ENCODE measurements at regions of chr19 and their contacts with region 1.

Region 1: DNA sequence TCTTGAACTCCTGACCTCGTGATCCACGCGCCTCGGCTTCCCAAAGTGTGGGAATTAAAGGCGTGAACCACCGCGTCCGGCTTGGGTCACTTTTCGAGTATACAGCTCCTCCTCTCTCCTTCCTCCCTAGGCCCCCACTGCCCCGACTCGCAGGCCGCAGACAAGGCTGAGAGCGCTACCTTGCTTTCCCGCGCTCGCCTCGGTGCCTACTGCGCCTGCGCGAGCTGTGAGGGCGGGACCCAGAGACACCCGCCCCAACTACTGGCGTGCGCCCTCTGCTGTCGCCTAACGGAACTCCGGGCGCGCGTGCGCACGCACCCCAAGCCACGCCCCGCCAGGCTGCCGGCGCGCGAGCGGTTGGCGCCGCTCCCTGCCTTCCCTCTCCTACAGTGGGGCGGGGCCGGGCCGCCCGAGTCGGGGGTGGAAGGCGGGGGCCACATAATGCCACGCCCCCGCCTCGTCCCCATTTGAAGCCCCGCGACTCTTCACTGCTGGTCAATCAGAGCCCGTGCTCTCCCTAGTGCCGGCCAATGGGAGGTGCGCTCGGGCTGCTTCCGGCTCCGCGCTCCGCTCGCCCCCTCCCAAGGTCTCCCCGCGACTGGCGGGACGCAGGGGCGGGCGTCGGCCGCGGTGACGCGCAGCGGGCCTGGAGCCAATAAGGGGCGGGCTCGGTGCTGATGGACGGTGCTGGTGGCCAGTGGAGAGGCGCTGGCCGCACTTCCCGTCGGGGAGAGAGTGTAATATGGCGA is at the start of gene RAB8A:
- DNase-seq: peak; percentile 98
- H3K4me3 Mint-ChIP-seq: peak within 1 kb of the TSS; percentile 99
- H3K27ac Mint-ChIP-seq: peak within 1 kb of the TSS; percentile 96
- H3K4me1 Mint-ChIP-seq: peaks cover 42% of the 10 kb centered on the region
- H3K27me3 Mint-ChIP-seq: no peaks in the 10 kb centered on the region
- total RNA-seq, gene RAB8A: 141 to 147 TPM

Region 2: GRCh38 chr19:15393963-15394362 is 717.4 kb before region 1 on chr19:
- CTCF ChIA-PET with region 1: no interaction called
- POLR2A ChIA-PET with region 1: no interaction called
- DNase-seq: no peak
- H3K4me3 Mint-ChIP-seq: no peak overlapping the region
- H3K27ac Mint-ChIP-seq: no peak overlapping the region
- H3K4me1 Mint-ChIP-seq: peaks cover 1% of the 10 kb centered on the region
- H3K27me3 Mint-ChIP-seq: no peaks in the 10 kb centered on the region

Region 3: DNA sequence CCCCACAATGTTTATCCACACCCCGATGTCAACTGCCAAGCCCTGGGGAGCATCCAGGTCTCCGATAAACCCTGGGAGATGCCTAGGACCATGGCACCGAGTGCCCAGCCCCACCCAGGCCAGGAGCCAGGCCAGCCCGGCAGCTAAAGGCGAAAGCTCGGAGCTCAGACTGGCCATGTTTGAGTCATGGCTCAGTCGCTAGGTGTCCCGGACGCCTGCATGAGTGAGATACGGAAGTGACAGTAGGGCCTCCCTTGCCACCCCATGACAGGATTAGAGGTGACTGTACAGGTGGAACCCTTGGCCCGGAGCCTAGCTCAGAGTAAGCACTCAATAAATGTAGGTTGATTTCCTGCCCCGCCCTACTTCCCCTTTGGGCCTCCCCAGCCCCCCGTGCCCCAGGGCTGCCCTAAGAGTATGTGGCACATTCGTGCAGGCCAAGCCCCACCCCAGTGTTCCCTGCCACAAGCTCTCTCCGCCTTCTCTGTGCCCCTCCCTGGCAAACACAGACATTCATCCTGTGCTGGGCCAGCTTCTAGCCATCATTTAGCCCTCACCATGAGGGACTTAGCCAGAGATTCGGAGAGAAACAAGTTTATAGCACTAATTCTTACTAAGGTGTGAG is 40.9 kb before region 1 on chr19:
- CTCF ChIA-PET with region 1: interaction called, 14 read pairs
- POLR2A ChIA-PET with region 1: interaction called, 73 read pairs
- DNase-seq: peak; percentile 90
- H3K4me3 Mint-ChIP-seq: no peak overlapping the region
- H3K27ac Mint-ChIP-seq: no peak overlapping the region
- H3K4me1 Mint-ChIP-seq: peaks cover 53% of the 10 kb centered on the region
- H3K27me3 Mint-ChIP-seq: no peaks in the 10 kb centered on the region

Region 4: DNA sequence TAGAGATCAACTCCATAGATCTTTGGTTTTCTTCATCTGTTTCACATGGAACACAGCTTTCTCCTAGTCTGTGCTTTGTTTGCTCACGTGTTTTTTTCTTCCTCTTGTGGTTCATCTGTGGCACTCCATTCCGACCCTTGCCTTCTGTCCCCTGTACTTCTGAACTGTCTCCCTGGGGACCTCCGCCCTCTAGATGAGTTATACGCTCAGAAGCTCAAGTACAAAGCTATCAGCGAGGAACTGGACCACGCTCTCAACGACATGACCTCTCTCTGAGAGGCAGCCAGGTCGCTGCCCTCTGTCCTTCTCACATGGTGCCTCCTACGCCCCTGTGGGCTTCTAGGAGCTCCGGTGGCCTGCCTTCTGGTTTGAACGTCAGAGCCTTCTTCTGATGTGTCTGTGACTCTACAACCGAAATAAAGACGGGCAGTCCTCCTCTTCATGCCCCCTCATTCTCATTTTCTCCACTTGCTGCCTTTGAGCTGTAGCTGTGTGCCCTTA is 16.2 kb before region 1 on chr19:
- CTCF ChIA-PET with region 1: interaction called, 18 read pairs
- POLR2A ChIA-PET with region 1: interaction called, 86 read pairs
- DNase-seq: no peak
- H3K4me3 Mint-ChIP-seq: no peak overlapping the region
- H3K27ac Mint-ChIP-seq: peak overlapping the region; percentile 65
- H3K4me1 Mint-ChIP-seq: peaks cover 41% of the 10 kb centered on the region
- H3K27me3 Mint-ChIP-seq: no peaks in the 10 kb centered on the region

Region 5: DNA sequence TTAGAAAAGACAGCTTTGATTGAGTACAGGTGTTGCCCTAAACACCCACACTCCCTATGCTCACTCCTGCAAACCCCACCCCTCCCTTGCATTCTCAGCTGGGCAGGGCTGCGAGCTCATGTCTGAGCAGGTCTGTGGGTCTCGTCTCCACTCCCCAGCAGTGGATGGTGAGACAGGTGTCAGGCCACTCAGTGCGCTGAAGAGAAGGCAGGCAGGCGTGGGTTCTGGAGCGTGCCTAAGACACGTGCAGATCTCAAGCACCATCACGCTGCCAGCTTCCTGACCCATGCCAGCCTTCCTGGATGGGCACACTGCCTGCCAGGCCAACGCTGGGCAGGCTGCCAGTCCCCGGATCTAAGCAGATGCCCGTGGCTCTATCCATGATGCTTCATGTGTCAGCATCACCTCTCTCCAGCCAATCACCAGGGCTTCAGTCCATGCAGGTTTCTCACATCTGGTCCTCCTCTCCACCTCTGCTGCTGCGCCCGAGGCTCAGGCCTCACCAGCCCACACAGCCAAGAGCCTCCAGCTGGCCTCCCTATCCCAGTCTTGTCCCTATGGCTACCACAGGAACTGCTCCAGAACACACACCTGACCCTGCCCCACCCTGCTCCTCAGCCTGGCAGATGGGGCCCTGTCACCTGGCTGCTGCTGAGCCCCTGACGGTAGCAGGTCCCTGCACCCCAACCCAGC is 317.9 kb after region 1 on chr19:
- CTCF ChIA-PET with region 1: no interaction called
- POLR2A ChIA-PET with region 1: no interaction called
- DNase-seq: no peak
- H3K4me3 Mint-ChIP-seq: no peak overlapping the region
- H3K27ac Mint-ChIP-seq: peak overlapping the region; percentile 49
- H3K4me1 Mint-ChIP-seq: peaks cover 34% of the 10 kb centered on the region
- H3K27me3 Mint-ChIP-seq: no peaks in the 10 kb centered on the region

Region 6: DNA sequence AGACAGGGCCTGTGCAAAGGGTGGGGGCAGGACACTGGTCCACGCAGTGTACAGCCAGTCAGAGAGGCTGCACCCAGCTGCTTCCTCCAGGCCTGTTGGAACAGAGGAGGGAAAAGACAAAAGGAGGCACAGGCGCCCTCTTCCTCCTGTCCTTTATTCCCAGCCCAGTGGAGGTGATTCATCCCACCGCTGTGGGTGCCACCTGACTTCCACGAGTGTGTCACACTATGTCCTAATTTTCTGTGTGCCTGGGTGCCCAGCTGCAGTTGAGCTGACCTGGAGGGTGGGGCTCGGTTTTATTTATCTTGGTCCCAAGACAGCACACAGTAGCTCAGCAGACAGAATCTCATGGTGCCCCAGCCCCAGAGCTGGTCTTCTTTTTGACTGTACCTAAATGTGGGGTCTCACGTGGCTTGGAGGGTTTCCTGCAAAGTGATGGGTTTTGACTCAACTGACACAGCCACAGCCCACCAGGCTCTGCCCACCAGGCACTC is 351.5 kb after region 1 on chr19:
- CTCF ChIA-PET with region 1: no interaction called
- POLR2A ChIA-PET with region 1: no interaction called
- DNase-seq: no peak
- H3K4me3 Mint-ChIP-seq: no peak overlapping the region
- H3K27ac Mint-ChIP-seq: no peak overlapping the region
- H3K4me1 Mint-ChIP-seq: peaks cover 32% of the 10 kb centered on the region
- H3K27me3 Mint-ChIP-seq: no peaks in the 10 kb centered on the region